ENCODE measurements at regions of chr1 and their contacts with region 1.

Region 1: GRCh38 chr1:221478050-221478949 is 263.6 kb downstream of the DUSP10 start:
- DNase-seq: peak; percentile 27
- ATAC-seq: peak; percentile 93
- H3K4me3 Mint-ChIP-seq: no peak overlapping the region
- H3K27ac Mint-ChIP-seq: no peak overlapping the region
- H3K4me1 Mint-ChIP-seq: peaks cover 4% of the 10 kb centered on the region
- H3K27me3 Mint-ChIP-seq: peaks cover 4% of the 10 kb centered on the region
- CTCF ChIP-seq: no peak

Region 2: GRCh38 chr1:221335161-221336101 is 142.9 kb before region 1 on chr1:
- CTCF ChIA-PET with region 1: no interaction called
- POLR2A ChIA-PET with region 1: no interaction called
- intact Hi-C with region 1: no loop called
- DNase-seq: no peak
- ATAC-seq: no peak
- H3K4me3 Mint-ChIP-seq: no peak overlapping the region
- H3K27ac Mint-ChIP-seq: no peak overlapping the region
- H3K4me1 Mint-ChIP-seq: no peaks in the 10 kb centered on the region
- H3K27me3 Mint-ChIP-seq: peaks cover 4% of the 10 kb centered on the region
- CTCF ChIP-seq: no peak

Region 3: GRCh38 chr1:221494670-221495069 is 16.4 kb after region 1 on chr1:
- CTCF ChIA-PET with region 1: no interaction called
- POLR2A ChIA-PET with region 1: no interaction called
- intact Hi-C with region 1: no loop called
- DNase-seq: no peak
- ATAC-seq: no peak
- H3K4me3 Mint-ChIP-seq: no peak overlapping the region
- H3K27ac Mint-ChIP-seq: no peak overlapping the region
- H3K4me1 Mint-ChIP-seq: no peaks in the 10 kb centered on the region
- H3K27me3 Mint-ChIP-seq: peaks cover 2% of the 10 kb centered on the region
- CTCF ChIP-seq: no peak

Region 4: GRCh38 chr1:221891708-221892107 is 413.4 kb after region 1 on chr1:
- CTCF ChIA-PET with region 1: interaction called, 7 read pairs
- POLR2A ChIA-PET with region 1: no interaction called
- intact Hi-C with region 1: loop called (anchors 1 kb)
- DNase-seq: no peak
- ATAC-seq: no peak
- H3K4me3 Mint-ChIP-seq: no peak overlapping the region
- H3K27ac Mint-ChIP-seq: no peak overlapping the region
- H3K4me1 Mint-ChIP-seq: peaks cover 17% of the 10 kb centered on the region
- H3K27me3 Mint-ChIP-seq: no peaks in the 10 kb centered on the region
- CTCF ChIP-seq: no peak

Region 5: GRCh38 chr1:221979461-221980032 is 501.2 kb after region 1 on chr1:
- CTCF ChIA-PET with region 1: interaction called, 20 read pairs
- POLR2A ChIA-PET with region 1: no interaction called
- intact Hi-C with region 1: no loop called
- DNase-seq: no peak
- ATAC-seq: no peak
- H3K4me3 Mint-ChIP-seq: no peak overlapping the region
- H3K27ac Mint-ChIP-seq: no peak overlapping the region
- H3K4me1 Mint-ChIP-seq: peaks cover 2% of the 10 kb centered on the region
- H3K27me3 Mint-ChIP-seq: peaks cover 3% of the 10 kb centered on the region
- CTCF ChIP-seq: no peak

Region 6: DNA sequence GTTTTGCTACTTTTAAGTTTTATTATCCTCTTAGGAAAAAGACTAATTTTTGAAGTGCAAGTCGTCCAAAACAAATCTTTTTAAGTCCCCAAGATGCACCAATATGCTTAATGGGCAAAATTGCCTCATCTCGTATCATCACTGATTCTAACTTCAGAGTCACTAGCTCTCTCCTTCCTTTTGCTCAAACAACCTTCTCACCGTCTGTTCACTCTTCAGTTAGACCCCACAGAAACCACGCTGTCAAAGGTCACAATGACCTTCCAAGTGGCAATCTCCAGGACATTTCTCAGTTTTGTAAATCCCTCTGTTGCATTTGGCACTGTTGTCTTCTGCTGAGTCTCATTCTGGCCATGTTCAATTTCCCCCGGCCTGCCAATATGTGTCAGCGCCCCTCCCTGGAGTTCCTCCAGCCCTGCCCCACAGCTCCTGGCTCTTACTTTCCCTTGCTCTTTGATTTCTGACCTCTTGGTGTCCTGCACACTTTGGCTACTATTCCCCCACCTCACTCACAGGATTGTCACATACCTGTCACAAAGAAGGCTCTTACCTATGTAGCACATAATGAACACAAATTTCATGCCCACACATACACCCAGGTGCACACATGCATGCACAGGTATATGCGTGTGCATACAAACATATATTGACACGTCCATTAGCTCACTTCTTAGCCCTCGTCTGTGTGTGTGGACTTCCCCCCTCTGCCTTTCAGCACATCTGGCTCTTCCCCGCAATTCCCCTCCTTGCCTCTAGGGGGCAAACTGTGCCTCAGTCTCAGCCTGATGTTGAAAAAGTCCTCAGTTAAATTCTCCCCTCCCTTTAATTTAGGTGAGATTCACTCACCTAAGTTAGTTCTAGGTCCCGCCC is 617.5 kb after region 1 on chr1:
- CTCF ChIA-PET with region 1: no interaction called
- POLR2A ChIA-PET with region 1: no interaction called
- intact Hi-C with region 1: loop called (anchors 5 kb)
- DNase-seq: no peak
- ATAC-seq: peak; percentile 82
- H3K4me3 Mint-ChIP-seq: no peak overlapping the region
- H3K27ac Mint-ChIP-seq: no peak overlapping the region
- H3K4me1 Mint-ChIP-seq: no peaks in the 10 kb centered on the region
- H3K27me3 Mint-ChIP-seq: peaks cover 7% of the 10 kb centered on the region
- CTCF ChIP-seq: peak; percentile 53

Region 7: GRCh38 chr1:222165629-222166028 is 687.3 kb after region 1 on chr1:
- CTCF ChIA-PET with region 1: interaction called, 37 read pairs
- POLR2A ChIA-PET with region 1: no interaction called
- intact Hi-C with region 1: loop called (anchors 1 kb)
- DNase-seq: no peak
- ATAC-seq: no peak
- H3K4me3 Mint-ChIP-seq: no peak overlapping the region
- H3K27ac Mint-ChIP-seq: no peak overlapping the region
- H3K4me1 Mint-ChIP-seq: no peaks in the 10 kb centered on the region
- H3K27me3 Mint-ChIP-seq: no peaks in the 10 kb centered on the region
- CTCF ChIP-seq: no peak

Region 8: GRCh38 chr1:222171005-222171404 is 692.7 kb after region 1 on chr1:
- CTCF ChIA-PET with region 1: interaction called, 37 read pairs
- POLR2A ChIA-PET with region 1: no interaction called
- intact Hi-C with region 1: loop called (anchors 1 kb)
- DNase-seq: no peak
- ATAC-seq: peak; percentile 52
- H3K4me3 Mint-ChIP-seq: no peak overlapping the region
- H3K27ac Mint-ChIP-seq: no peak overlapping the region
- H3K4me1 Mint-ChIP-seq: no peaks in the 10 kb centered on the region
- H3K27me3 Mint-ChIP-seq: peaks cover 16% of the 10 kb centered on the region
- CTCF ChIP-seq: no peak

Measured in activated B cell treated with CpG ODN at 0.5 μM for 24 hours (primary cell).